ENCODE measurements at regions of chr20 and their contacts with region 1.

Region 1: GRCh38 chr20:33992923-33993575 is 662 bp upstream of the RALY start:
- DNase-seq: peak; percentile 100
- H3K4me3 ChIP-seq: peak overlapping the region; percentile 67 to 96 (median 91)
- H3K27ac ChIP-seq: peak overlapping the region; percentile 97 to 99 (median 99)
- H3K4me1 ChIP-seq: peaks cover 0 to 50% (median 40%) of the 10 kb centered on the region in 4 donors
- H3K27me3 ChIP-seq: no peaks in the 10 kb centered on the region
- CTCF ChIP-seq: no peak
- EP300 ChIP-seq: no peak
- POLR2A ChIP-seq: peak; percentile 44 to 61

Region 2: DNA sequence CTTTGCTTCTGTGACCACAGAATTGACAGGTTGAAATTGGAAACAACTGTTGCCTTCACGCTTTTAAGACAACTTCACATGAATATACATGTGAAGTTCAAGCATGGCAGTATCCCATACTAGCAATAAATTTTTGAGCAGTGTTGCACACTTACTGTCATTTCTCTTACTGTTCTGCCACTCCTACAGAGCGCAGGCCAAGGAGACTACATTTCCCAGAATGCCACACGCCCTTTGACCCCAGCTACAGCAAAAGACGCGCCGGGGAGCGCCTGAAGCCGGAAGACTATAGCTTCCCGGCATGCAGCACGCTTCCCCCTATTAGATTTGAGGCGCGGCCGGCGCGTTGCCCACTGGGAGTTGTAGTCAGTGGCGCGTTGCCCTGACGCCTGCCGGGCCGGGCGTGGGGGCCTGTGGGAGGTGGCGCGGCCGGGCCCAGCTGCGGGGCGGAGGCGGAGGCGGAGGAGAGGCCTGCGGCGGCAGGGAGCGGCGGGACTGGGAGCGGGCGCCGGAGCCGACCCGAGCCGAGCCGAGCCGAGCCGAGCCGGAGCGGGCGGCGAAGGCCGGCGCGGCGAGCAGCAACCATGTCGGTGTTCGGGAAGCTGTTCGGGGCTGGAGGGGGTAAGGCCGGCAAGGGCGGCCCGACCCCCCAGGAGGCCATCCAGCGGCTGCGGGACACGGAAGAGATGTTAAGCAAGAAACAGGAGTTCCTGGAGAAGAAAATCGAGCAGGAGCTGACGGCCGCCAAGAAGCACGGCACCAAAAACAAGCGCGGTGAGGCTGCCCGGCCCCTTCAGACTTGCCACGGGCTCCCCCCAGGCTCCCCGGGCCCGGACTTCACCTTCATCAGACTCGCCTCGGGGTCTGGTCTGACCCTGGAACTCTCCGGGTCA is 181.9 kb before region 1 on chr20 and contains the start of gene CHMP4B:
- intact Hi-C with region 1: loop called (anchors 5 kb)
- DNase-seq: peak; percentile 100
- H3K4me3 ChIP-seq: peak within 1 kb of the TSS; percentile 89 to 92 (median 90)
- H3K27ac ChIP-seq: peak within 1 kb of the TSS; percentile 93 to 99 (median 96)
- H3K4me1 ChIP-seq: peaks cover 0 to 42% (median 35%) of the 10 kb centered on the region in 4 donors
- H3K27me3 ChIP-seq: no peaks in the 10 kb centered on the region
- CTCF ChIP-seq: no peak
- EP300 ChIP-seq: no peak
- POLR2A ChIP-seq: peak; percentile 19 to 49
- total RNA-seq, gene CHMP4B: 102 to 115 (median 108) TPM

Region 3: GRCh38 chr20:33971147-33971975 is 21.7 kb before region 1 on chr20:
- intact Hi-C with region 1: loop called (anchors 2 kb)
- DNase-seq: peak; percentile 91
- H3K4me3 ChIP-seq: no peak overlapping the region
- H3K27ac ChIP-seq: peak overlapping the region; percentile 31 to 79 (median 64)
- H3K4me1 ChIP-seq: peaks cover 0 to 16% (median 8%) of the 10 kb centered on the region in 4 donors
- H3K27me3 ChIP-seq: no peaks in the 10 kb centered on the region
- CTCF ChIP-seq: no peak
- EP300 ChIP-seq: peak; percentile 26 to 93 (median 80)
- POLR2A ChIP-seq: no peak

Region 4: DNA sequence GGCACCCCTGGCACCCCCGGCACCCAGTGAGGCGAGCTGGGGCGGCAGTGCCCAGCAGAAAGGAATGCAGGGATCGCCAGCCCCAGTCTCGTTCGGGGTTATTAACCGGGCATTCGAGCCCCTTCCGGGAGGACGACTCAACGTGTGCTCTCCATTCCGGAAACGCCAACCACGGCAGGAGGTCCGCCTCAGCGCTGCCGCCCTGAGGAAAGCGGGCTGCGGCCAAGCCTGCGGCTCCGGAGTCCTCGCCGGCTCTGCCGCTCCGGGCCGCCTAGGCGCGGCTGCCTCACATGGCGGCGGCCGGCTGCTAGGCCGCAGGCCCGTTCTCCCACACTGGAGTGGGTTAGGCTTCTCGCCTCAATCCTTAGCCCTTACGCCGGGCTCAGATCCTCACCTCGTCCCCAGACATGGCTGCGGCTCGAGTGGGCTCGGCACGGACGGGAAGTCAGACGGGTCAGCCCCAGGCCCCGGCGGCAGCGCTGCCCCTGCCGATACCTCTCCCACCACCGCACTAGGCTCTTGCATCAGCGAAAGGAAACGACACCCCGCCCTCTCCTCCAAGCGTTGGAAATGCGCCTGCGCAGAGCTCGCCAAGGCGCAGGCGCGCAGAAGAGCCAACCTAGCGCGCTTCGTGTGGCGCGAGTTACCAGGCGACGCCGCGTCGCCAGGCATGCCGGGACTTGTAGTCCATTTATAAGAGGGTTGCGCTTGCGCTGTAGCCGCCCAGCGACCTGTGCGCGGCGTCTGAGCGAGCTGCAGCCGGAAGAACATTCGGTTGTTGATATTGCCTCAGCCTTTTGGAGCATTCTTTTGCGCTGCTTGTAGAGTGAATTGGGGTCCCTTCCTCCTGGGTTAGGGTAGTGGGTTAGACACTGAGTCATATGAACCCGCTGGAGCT is 118.9 kb after region 1 on chr20 and contains the start of gene EIF2S2:
- intact Hi-C with region 1: loop called (anchors 2 kb)
- DNase-seq: peak; percentile 98
- H3K4me3 ChIP-seq: peak within 1 kb of the TSS; percentile 88 to 93 (median 90)
- H3K27ac ChIP-seq: peak within 1 kb of the TSS; percentile 97 to 99 (median 98)
- H3K4me1 ChIP-seq: peaks cover 0 to 47% (median 42%) of the 10 kb centered on the region in 4 donors
- H3K27me3 ChIP-seq: no peaks in the 10 kb centered on the region
- CTCF ChIP-seq: no peak
- EP300 ChIP-seq: peak in 1 of 4 donors; percentile 56
- POLR2A ChIP-seq: peak; percentile 95 to 96
- total RNA-seq, gene EIF2S2: 44.6 to 52.8 (median 47.4) TPM

Measured in sigmoid colon (tissue), 7 donors.